WTC11 (cell line): ENCODE measurements at regions of chr20 and their contacts with region 1.

Region 1: GRCh38 chr20:49610701-49611538 is 43.0 kb upstream of the PTGIS start:
- DNase-seq: peak; percentile 95
- ATAC-seq: peak; percentile 82
- H3K4me3 Mint-ChIP-seq: peak overlapping the region; percentile 74
- H3K27ac Mint-ChIP-seq: 0 out of 2 replicates have a peak overlapping the region, but pooled peaks have one; percentile 4
- H3K4me1 Mint-ChIP-seq: peaks cover 5% of the 10 kb centered on the region; the same call in 1 of the 2 replicates
- H3K27me3 Mint-ChIP-seq: no peaks in the 10 kb centered on the region
- CTCF ChIP-seq: peak; percentile 100

Region 2: GRCh38 chr20:49384437-49385088 is 226.4 kb before region 1 on chr20:
- CTCF ChIA-PET with region 1: interaction called, 10 read pairs
- POLR2A ChIA-PET with region 1: no interaction called
- DNase-seq: peak; percentile 97
- ATAC-seq: peak; percentile 79
- H3K4me3 Mint-ChIP-seq: no peak overlapping the region
- H3K27ac Mint-ChIP-seq: 0 out of 2 replicates have a peak overlapping the region, but pooled peaks have one; percentile 1
- H3K4me1 Mint-ChIP-seq: peaks cover 29% of the 10 kb centered on the region
- H3K27me3 Mint-ChIP-seq: no peaks in the 10 kb centered on the region
- CTCF ChIP-seq: peak; percentile 91

Region 3: DNA sequence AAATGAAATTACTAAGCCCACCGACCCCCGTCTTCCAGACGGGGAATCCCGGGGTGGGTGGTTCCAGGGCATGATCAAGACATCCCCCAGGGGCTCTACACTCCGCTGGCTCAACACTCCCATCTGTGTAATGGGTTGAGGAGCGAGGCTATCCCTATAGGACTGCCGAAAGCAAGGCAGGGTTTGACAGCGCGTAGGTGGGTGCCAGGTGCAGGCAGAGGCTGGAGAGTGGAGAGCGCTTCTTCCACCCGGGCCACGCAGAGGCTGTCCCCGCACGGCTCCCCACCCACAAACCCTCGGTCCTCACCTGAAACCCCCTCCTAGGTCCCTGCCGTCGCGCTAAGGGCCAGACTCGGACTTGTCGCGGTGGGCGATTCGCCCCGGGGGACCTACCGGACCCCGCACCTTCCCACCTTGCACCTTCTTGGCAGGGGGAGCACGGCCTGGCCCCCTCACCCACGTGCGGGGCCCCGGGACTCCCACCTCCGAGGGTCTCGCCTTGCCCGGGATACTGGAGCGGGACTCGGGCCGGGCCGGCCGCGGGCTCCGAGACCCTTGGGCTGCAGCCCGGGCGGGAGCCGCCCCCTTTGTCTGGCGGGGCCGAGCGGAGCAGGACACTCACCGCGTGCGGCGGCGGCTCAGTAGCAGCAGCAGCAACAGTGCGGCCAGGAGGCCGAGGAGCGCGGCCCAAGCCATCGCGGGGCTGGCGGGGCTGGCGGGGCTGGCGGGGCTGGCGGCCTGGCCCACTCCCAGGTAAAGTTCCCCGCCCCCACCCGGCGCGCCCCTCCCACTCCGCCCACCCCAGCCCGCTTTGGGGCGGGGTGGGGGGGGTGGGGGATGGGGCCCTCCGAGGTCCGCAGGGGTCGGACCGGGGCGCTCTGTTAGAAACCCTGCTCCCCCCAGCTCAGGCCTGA is 43.2 kb before region 1 on chr20 and contains the start of gene PTGIS:
- CTCF ChIA-PET with region 1: interaction called, 18 read pairs
- POLR2A ChIA-PET with region 1: no interaction called
- DNase-seq: peak; percentile 82
- ATAC-seq: peak; percentile 73
- H3K4me3 Mint-ChIP-seq: peak within 1 kb of the TSS; percentile 83
- H3K27ac Mint-ChIP-seq: peak within 1 kb of the TSS; percentile 84
- H3K4me1 Mint-ChIP-seq: peaks cover 48% of the 10 kb centered on the region
- H3K27me3 Mint-ChIP-seq: no peaks in the 10 kb centered on the region
- CTCF ChIP-seq: no peak
- total RNA-seq, gene PTGIS: 24.3 to 37.0 TPM (median 34.4 TPM) in 3 replicates

Region 4: GRCh38 chr20:49594143-49594930 is 16.6 kb before region 1 on chr20:
- CTCF ChIA-PET with region 1: interaction called, 10 read pairs
- POLR2A ChIA-PET with region 1: no interaction called
- DNase-seq: no peak
- ATAC-seq: no peak
- H3K4me3 Mint-ChIP-seq: no peak overlapping the region
- H3K27ac Mint-ChIP-seq: no peak overlapping the region
- H3K4me1 Mint-ChIP-seq: peaks cover 6% of the 10 kb centered on the region; the same call in 1 of the 2 replicates
- H3K27me3 Mint-ChIP-seq: no peaks in the 10 kb centered on the region; the same call in none of the 2 replicates
- CTCF ChIP-seq: no peak

Region 5: GRCh38 chr20:49721376-49721775 is 110.5 kb after region 1 on chr20:
- CTCF ChIA-PET with region 1: no interaction called
- POLR2A ChIA-PET with region 1: no interaction called
- DNase-seq: no peak
- ATAC-seq: no peak
- H3K4me3 Mint-ChIP-seq: no peak overlapping the region
- H3K27ac Mint-ChIP-seq: no peak overlapping the region
- H3K4me1 Mint-ChIP-seq: peaks cover 25% of the 10 kb centered on the region
- H3K27me3 Mint-ChIP-seq: no peaks in the 10 kb centered on the region
- CTCF ChIP-seq: no peak

Region 6: GRCh38 chr20:49758781-49759180 is 147.9 kb after region 1 on chr20:
- CTCF ChIA-PET with region 1: interaction called, 10 read pairs
- POLR2A ChIA-PET with region 1: no interaction called
- DNase-seq: peak; percentile 34
- ATAC-seq: peak; percentile 76
- H3K4me3 Mint-ChIP-seq: no peak overlapping the region
- H3K27ac Mint-ChIP-seq: peak overlapping the region; percentile 20
- H3K4me1 Mint-ChIP-seq: peaks cover 36% of the 10 kb centered on the region
- H3K27me3 Mint-ChIP-seq: no peaks in the 10 kb centered on the region
- CTCF ChIP-seq: no peak

Region 7: GRCh38 chr20:49846206-49846807 is 235.4 kb after region 1 on chr20:
- CTCF ChIA-PET with region 1: interaction called, 40 read pairs
- POLR2A ChIA-PET with region 1: no interaction called
- DNase-seq: peak; percentile 39
- ATAC-seq: peak; percentile 84
- H3K4me3 Mint-ChIP-seq: no peak overlapping the region
- H3K27ac Mint-ChIP-seq: no peak overlapping the region
- H3K4me1 Mint-ChIP-seq: peaks cover 35% of the 10 kb centered on the region
- H3K27me3 Mint-ChIP-seq: no peaks in the 10 kb centered on the region
- CTCF ChIP-seq: peak; percentile 26; the same call in 1 of the 2 replicates

Region 8: GRCh38 chr20:49901588-49901987 is 290.7 kb after region 1 on chr20:
- CTCF ChIA-PET with region 1: interaction called, 13 read pairs
- POLR2A ChIA-PET with region 1: no interaction called
- DNase-seq: no peak
- ATAC-seq: no peak
- H3K4me3 Mint-ChIP-seq: no peak overlapping the region
- H3K27ac Mint-ChIP-seq: no peak overlapping the region
- H3K4me1 Mint-ChIP-seq: no peaks in the 10 kb centered on the region
- H3K27me3 Mint-ChIP-seq: 0 out of 2 replicates have a peak, but pooled peaks cover 3% of the 10 kb centered on the region
- CTCF ChIP-seq: no peak